ENCODE measurements at regions of chr3 and their contacts with region 1.

Region 1: GRCh38 chr3:46488735-46489361 is 8.9 kb upstream of the RTP3 start:
- DNase-seq: peak; percentile 97
- ATAC-seq: peak; percentile 99
- H3K4me3 Mint-ChIP-seq: no peak overlapping the region
- H3K27ac Mint-ChIP-seq: no peak overlapping the region
- H3K4me1 Mint-ChIP-seq: peaks cover 14% of the 10 kb centered on the region
- H3K27me3 Mint-ChIP-seq: no peaks in the 10 kb centered on the region

Region 2: GRCh38 chr3:45593708-45594609 is 894.9 kb before region 1 on chr3:
- CTCF ChIA-PET with region 1: no interaction called
- POLR2A ChIA-PET with region 1: no interaction called
- intact Hi-C with region 1: no loop called
- DNase-seq: peak; percentile 82
- ATAC-seq: peak; percentile 81
- H3K4me3 Mint-ChIP-seq: peak overlapping the region; percentile 86
- H3K27ac Mint-ChIP-seq: peak overlapping the region; percentile 82
- H3K4me1 Mint-ChIP-seq: peaks cover 46% of the 10 kb centered on the region
- H3K27me3 Mint-ChIP-seq: no peaks in the 10 kb centered on the region

Region 3: GRCh38 chr3:46478341-46478740 is 10.5 kb before region 1 on chr3:
- CTCF ChIA-PET with region 1: interaction called, 32 read pairs
- POLR2A ChIA-PET with region 1: no interaction called
- intact Hi-C with region 1: no loop called
- DNase-seq: no peak
- ATAC-seq: no peak
- H3K4me3 Mint-ChIP-seq: no peak overlapping the region
- H3K27ac Mint-ChIP-seq: no peak overlapping the region
- H3K4me1 Mint-ChIP-seq: no peaks in the 10 kb centered on the region
- H3K27me3 Mint-ChIP-seq: peaks cover 22% of the 10 kb centered on the region

Region 4: DNA sequence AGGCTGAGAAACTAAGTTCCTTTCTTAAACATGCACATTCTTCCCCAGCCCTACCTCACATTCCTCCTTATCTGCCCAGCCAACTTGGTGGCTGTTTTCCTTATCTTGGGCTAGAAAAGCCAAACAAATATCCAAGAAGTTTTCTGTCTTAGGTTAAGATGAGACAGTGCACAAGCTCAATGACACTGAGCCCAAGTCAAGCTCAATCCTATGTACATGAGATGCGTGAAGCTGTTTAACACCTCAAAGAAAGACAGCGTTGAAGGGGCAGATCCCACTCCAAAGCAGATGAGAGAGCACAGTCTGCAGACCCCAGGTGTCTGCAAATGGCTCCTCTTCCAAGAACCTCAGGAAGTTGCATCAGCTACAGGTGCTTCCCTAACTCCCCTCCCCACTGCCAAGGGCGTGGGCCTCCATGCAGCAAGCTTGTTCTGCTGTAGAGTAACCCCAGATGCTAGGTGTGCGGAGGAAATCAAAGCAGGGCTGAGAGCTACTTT is 60.6 kb after region 1 on chr3:
- CTCF ChIA-PET with region 1: interaction called, 19 read pairs
- POLR2A ChIA-PET with region 1: no interaction called
- intact Hi-C with region 1: no loop called
- DNase-seq: no peak
- ATAC-seq: no peak
- H3K4me3 Mint-ChIP-seq: no peak overlapping the region
- H3K27ac Mint-ChIP-seq: no peak overlapping the region
- H3K4me1 Mint-ChIP-seq: peaks cover 13% of the 10 kb centered on the region
- H3K27me3 Mint-ChIP-seq: no peaks in the 10 kb centered on the region

Region 5: GRCh38 chr3:46566036-46566641 is 77.3 kb after region 1 on chr3 and contains the start of gene LRRC2:
- CTCF ChIA-PET with region 1: interaction called, 103 read pairs
- POLR2A ChIA-PET with region 1: no interaction called
- intact Hi-C with region 1: no loop called
- DNase-seq: peak; percentile 50
- ATAC-seq: peak; percentile 66
- H3K4me3 Mint-ChIP-seq: peak within 1 kb of the TSS; percentile 58
- H3K27ac Mint-ChIP-seq: peak within 1 kb of the TSS; percentile 39
- H3K4me1 Mint-ChIP-seq: peaks cover 13% of the 10 kb centered on the region
- H3K27me3 Mint-ChIP-seq: peaks cover 18% of the 10 kb centered on the region
- total RNA-seq, gene LRRC2: 0.04 TPM in 1 of 2 experiments, not detected in the other

Region 6: DNA sequence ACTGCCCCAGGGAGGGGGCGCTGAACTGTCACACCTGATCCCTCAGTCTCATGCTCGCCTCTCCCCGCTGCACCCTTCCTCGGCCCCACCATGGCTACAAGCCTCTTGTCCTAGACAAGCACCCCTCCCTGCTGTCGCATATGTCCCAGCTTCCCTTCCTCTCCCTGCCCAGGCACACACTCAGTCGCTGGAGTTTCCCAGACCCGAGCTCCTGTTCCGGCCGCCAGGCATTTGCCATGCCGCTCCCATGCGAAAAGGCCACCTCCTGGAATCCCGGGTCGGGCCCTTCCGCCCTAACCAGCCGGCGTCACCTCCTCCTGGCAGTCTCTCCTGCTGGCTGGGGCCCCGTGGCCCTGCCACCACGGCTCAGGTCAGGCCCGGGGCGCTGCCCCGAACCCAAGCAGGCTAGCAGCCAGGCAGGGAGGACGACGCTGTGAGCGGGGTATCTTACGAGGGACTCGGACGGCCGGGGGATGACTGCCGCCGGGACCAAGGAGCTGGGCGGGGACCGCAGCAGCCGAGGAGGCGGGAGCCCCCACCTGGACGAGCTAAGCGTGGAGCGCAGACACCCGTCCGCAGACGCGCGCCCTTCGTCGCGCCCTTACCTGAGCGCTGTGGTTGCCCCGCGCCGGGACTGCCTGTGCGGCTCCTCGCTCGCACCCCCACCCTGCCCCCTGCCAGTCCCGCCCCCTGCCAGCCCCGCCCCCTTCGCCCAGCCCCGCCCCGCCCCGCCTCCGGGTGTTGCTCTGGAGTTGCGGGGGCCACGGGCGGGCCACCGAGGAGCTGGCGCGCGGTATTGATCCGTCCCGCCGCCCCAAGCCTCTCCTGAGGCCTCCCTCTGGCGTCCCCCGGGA is 204.4 kb after region 1 on chr3 and contains the start of gene ALS2CL:
- CTCF ChIA-PET with region 1: interaction called, 3 read pairs
- POLR2A ChIA-PET with region 1: no interaction called
- intact Hi-C with region 1: loop called in 1 of 2 experiments (anchors 2 kb)
- DNase-seq: peak; percentile 80
- ATAC-seq: peak; percentile 64
- H3K4me3 Mint-ChIP-seq: peak within 1 kb of the TSS; percentile 73
- H3K27ac Mint-ChIP-seq: peak within 1 kb of the TSS; percentile 55
- H3K4me1 Mint-ChIP-seq: peaks cover 50% of the 10 kb centered on the region
- H3K27me3 Mint-ChIP-seq: no peaks in the 10 kb centered on the region
- total RNA-seq, gene ALS2CL: 3.2 to 3.3 TPM